ENCODE measurements at regions of chr5 and their contacts with region 1.

Region 1: GRCh38 chr5:37966291-37966690 is 126.5 kb upstream of the GDNF start:
- DNase-seq: no peak
- ATAC-seq: no peak

Region 2: DNA sequence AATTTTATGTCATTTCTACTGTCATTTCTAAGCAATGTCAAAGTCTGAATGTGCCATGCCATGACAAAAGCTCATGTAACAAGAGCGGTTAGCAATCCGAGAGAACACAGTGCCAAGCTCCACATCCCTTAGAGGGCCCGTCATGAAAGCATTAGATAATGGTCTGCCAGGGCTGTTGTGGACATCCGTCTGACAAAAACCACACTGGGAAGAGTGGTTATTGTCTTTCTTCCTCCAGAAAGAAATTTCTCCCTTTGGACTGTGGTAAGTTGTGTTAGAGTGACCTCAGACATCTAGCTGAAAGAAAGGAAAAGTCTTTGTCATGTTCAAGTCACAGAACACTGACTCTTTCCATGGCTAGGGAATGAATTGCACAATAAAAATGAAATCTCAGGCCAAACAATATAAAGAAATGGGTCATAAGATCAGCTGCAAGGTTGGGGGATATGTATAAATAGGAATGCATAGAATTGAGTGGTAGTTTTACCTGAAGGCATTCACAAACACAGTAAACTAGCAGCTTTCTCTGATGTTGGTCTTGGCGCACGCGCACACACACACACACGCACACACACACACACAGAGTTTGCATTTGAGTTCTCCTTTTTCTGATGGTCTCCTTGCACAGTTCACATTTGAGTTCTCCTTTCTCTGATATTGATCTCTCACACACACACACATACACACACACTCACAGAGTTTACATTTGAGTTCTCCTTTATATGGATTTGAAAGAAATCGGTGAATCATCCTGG is 1354.6 kb before region 1 on chr5:
- intact Hi-C with region 1: loop called (anchors 10 kb)
- DNase-seq: no peak
- ATAC-seq: no peak